ENCODE measurements at regions of chr7 and their contacts with region 1.

Region 1: DNA sequence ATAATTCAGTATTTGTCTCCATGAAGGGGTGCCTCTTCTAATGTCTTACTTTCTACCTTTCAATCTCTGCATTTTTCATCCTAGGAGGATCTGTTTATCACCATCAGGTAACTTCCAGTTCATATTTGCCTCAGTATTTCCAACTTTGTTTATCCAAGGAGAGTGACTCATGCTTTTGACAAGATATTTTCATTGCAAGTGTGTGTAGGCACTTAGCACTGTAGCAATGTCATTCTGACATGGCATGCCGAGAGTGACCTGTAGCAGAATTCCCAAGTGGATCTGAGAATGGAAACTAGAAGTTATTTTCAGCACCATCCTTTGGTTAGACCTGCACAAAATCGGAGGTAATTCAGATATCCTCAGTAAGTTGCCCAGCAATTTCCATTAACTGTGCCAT is 129.9 kb downstream of the INHBA start:
- DNase-seq: no peak
- ATAC-seq: no peak
- H3K4me3 ChIP-seq: no peak overlapping the region
- H3K27ac ChIP-seq: no peak overlapping the region
- H3K4me1 ChIP-seq: peaks cover 0 to 8% of the 10 kb centered on the region in 2 donors
- H3K27me3 ChIP-seq: no peaks in the 10 kb centered on the region

Region 2: GRCh38 chr7:41478187-41478586 is 94.8 kb before region 1 on chr7:
- intact Hi-C with region 1: loop called in 1 of 2 experiments (anchors 5 kb)
- DNase-seq: no peak
- ATAC-seq: no peak
- H3K4me3 ChIP-seq: no peak overlapping the region
- H3K27ac ChIP-seq: no peak overlapping the region
- H3K4me1 ChIP-seq: peaks cover 0 to 8% of the 10 kb centered on the region in 2 donors
- H3K27me3 ChIP-seq: no peaks in the 10 kb centered on the region

Region 3: DNA sequence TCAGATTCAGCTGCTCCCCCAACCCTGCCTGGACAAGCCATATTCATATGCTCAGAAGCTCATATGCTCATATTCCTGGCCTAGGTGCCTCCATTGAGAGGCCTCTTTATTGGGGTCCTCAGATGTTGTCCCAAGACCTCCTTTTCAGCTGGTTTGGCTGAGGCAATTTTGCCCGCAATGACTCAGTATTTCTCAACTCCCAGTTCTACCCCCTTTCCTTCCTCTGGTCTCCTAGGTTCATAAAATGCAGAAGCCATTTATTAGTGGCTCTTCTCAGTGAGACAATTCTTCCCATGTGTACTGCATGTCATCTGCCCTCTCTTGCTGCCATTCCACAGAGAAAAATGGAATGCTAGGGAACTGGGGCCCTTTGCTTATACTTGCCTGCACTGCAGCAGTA is 19.2 kb after region 1 on chr7:
- intact Hi-C with region 1: no loop called
- DNase-seq: no peak
- ATAC-seq: no peak
- H3K4me3 ChIP-seq: no peak overlapping the region
- H3K27ac ChIP-seq: no peak overlapping the region
- H3K4me1 ChIP-seq: no peaks in the 10 kb centered on the region
- H3K27me3 ChIP-seq: no peaks in the 10 kb centered on the region

Region 4: DNA sequence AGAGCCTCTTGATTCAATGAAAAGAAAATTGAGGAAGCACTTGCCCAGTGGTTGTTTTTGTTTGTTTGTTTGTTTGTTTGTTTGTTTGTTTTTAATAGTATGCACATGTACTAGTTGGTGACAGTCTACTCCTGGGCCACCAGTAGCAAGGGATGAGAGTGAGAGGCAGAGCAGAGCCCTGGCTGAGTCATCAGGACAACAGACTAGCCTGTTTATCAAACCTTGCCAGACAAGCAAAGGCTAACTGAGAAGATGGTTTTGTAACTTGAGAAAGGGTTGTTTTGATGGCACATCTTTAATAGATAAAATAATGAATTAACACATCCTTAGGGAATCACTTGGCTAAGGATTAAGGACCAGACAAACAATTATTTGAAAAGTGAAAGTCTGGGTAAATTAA is 51.8 kb after region 1 on chr7:
- intact Hi-C with region 1: no loop called
- DNase-seq: no peak
- ATAC-seq: no peak
- H3K4me3 ChIP-seq: no peak overlapping the region
- H3K27ac ChIP-seq: no peak overlapping the region
- H3K4me1 ChIP-seq: no peaks in the 10 kb centered on the region
- H3K27me3 ChIP-seq: no peaks in the 10 kb centered on the region

Region 5: DNA sequence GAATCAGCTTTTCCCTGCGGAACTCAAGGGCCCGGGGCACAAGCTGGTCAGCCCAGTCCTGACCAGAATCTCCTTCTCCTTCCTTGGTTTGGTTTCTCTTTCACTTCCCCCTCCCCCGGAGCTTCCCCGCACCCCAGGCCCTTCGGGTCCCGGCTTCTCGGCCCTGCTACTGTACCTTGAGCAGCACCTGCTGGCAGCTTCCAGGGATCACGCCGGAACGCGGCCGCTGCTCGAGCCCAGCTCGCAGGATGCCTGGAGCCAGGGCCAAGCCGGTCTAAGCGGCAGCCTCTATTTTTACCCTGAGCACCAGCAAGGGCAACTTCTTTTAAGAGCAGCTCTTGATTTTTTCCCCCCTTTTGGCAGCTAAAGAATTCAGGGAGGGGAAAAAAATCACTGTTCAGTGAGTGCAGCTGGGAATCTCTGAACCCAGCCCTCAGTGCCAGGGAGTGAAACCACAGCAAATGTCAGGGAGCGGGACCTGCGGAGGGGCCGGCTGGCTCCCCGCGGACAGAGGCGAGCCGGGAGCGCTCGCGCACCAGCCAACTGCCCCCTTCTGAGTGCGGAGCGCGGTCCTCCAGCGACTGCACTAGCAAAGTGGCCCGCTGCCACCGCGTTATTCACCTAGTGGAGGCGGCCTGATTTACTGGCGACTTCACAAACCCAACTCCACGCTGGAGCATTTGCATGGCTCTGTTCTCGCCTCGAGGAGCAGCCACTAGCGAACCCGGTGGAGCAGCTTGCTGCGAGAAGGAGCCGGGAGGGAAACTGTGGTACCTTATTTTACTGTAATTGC is 132.3 kb after region 1 on chr7:
- intact Hi-C with region 1: no loop called
- DNase-seq: peak; percentile 93 to 95
- ATAC-seq: peak; percentile 90
- H3K4me3 ChIP-seq: peak overlapping the region; percentile 40 to 73
- H3K27ac ChIP-seq: peak overlapping the region; percentile 79 to 91
- H3K4me1 ChIP-seq: peaks cover 2% of the 10 kb centered on the region in 2 donors
- H3K27me3 ChIP-seq: no peaks in the 10 kb centered on the region